IMR-90 (cell line): ENCODE measurements at regions of chr11 and their contacts with region 1.

Region 1: GRCh38 chr11:46611526-46612304 is 5.3 kb downstream of the HARBI1 start:
- DNase-seq: no peak
- ATAC-seq: no peak
- H3K4me3 ChIP-seq: no peak overlapping the region
- H3K27ac ChIP-seq: no peak overlapping the region
- H3K4me1 ChIP-seq: peaks cover 5% of the 10 kb centered on the region; the same call in 1 of the 2 replicates
- H3K27me3 ChIP-seq: no peaks in the 10 kb centered on the region
- CTCF ChIP-seq: no peak
- POLR2A ChIP-seq: no peak
- RAD21 ChIP-seq: no peak

Region 2: DNA sequence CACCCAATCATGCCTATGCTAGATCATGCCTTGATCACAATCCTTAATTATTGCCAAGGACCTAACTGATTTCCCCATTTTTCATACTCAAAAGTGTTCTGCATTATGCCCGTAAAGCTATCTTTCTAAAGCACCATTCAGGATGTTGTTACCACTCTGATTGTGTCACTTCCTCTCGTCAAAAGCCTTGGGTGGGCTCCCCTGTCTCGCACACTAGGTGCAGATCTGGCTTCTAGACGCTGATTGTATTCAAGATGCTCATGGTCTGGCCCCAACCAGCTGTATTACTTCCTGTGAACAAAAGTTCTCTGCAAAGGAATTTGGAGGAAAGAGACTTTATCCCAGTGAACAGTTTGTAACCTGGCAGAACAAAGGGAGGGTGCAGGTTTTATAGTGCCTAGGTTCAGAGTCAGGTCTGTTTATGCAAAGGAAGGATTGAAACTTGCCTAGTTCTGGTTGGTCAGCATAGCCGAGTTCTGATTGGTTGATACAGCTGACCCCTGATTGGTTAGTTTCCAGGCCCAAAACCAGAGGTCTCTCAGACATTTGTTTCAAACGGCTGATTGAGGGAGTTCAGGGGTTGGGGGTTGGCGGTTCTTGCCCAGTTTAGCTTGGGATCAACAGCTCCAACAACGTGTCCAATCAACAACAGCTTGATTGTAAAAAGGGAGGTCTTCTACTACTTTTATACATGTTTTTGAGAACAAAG is 31.1 kb after region 1 on chr11:
- CTCF ChIA-PET with region 1: interaction called, 10 read pairs
- POLR2A ChIA-PET with region 1: no interaction called
- dilution Hi-C with region 1: no loop called
- in situ Hi-C with region 1: no loop called
- intact Hi-C with region 1: no loop called
- DNase-seq: no peak
- ATAC-seq: no peak
- H3K4me3 ChIP-seq: no peak overlapping the region
- H3K27ac ChIP-seq: no peak overlapping the region
- H3K4me1 ChIP-seq: peaks cover 3% of the 10 kb centered on the region
- H3K27me3 ChIP-seq: no peaks in the 10 kb centered on the region
- CTCF ChIP-seq: no peak
- POLR2A ChIP-seq: no peak
- RAD21 ChIP-seq: no peak

Region 3: GRCh38 chr11:46896719-46897406 is 285.1 kb after region 1 on chr11:
- CTCF ChIA-PET with region 1: no interaction called
- POLR2A ChIA-PET with region 1: no interaction called
- dilution Hi-C with region 1: no loop called
- in situ Hi-C with region 1: no loop called
- intact Hi-C with region 1: no loop called
- DNase-seq: peak; percentile 37
- ATAC-seq: peak; percentile 75
- H3K4me3 ChIP-seq: no peak overlapping the region
- H3K27ac ChIP-seq: no peak overlapping the region
- H3K4me1 ChIP-seq: no peaks in the 10 kb centered on the region
- H3K27me3 ChIP-seq: no peaks in the 10 kb centered on the region
- CTCF ChIP-seq: peak; percentile 27
- POLR2A ChIP-seq: no peak
- RAD21 ChIP-seq: no peak